CD8-positive, alpha-beta memory T cell (primary cell): ENCODE measurements at regions of chr11 and their contacts with region 1.

Region 1: GRCh38 chr11:86938900-86939880 is 16.0 kb downstream of the FZD4 start:
- DNase-seq: peak in 2 of 5 donors; percentile 10 to 16
- H3K4me3 ChIP-seq: no peak overlapping the region
- H3K4me3 Mint-ChIP-seq: no peak overlapping the region
- H3K27ac ChIP-seq: peak overlapping the region; percentile 48
- H3K27ac Mint-ChIP-seq: no peak overlapping the region
- H3K4me1 ChIP-seq: no peaks in the 10 kb centered on the region
- H3K4me1 Mint-ChIP-seq: no peaks in the 10 kb centered on the region
- H3K27me3 ChIP-seq: no peaks in the 10 kb centered on the region
- H3K27me3 Mint-ChIP-seq: peaks cover 10 to 14% of the 10 kb centered on the region in 2 donors

Region 2: GRCh38 chr11:86802601-86803051 is 136.6 kb before region 1 on chr11:
- CTCF ChIA-PET with region 1: no interaction called
- POLR2A ChIA-PET with region 1: no interaction called
- DNase-seq: no peak
- H3K4me3 ChIP-seq: no peak overlapping the region
- H3K4me3 Mint-ChIP-seq: peak overlapping the region in 1 of 7 donors; percentile 76
- H3K27ac ChIP-seq: no peak overlapping the region
- H3K27ac Mint-ChIP-seq: no peak overlapping the region
- H3K4me1 ChIP-seq: peaks cover 18% of the 10 kb centered on the region
- H3K4me1 Mint-ChIP-seq: peaks cover 19 to 50% (median 24%) of the 10 kb centered on the region in 3 donors
- H3K27me3 ChIP-seq: no peaks in the 10 kb centered on the region
- H3K27me3 Mint-ChIP-seq: peaks cover 9 to 35% of the 10 kb centered on the region in 2 donors

Region 3: DNA sequence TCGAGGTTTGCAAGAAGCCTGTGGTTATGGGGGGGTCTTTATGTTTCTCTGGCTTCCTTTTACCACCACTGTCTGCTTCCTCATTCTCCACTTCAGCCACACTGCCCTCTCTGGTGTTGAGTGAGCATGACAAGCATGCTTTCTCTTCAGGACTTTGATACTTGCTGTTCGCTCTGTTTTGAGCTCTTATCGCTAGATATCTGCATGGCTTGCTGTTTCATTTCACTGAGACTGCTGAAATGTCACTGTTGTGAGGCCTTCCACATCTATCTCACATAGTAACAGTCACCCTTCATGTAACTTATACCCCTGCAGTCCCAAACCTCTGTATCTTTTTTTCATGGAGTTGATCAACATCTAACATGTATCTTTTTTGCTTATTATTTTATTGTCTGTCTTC is 158.4 kb after region 1 on chr11:
- CTCF ChIA-PET with region 1: no interaction called
- POLR2A ChIA-PET with region 1: no interaction called
- DNase-seq: peak in 3 of 5 donors; percentile 9 to 19 (median 17)
- H3K4me3 ChIP-seq: no peak overlapping the region
- H3K4me3 Mint-ChIP-seq: peak overlapping the region in 1 of 7 donors; percentile 20
- H3K27ac ChIP-seq: no peak overlapping the region
- H3K27ac Mint-ChIP-seq: peak overlapping the region in 2 of 8 donors; percentile 16 to 37
- H3K4me1 ChIP-seq: peaks cover 11% of the 10 kb centered on the region
- H3K4me1 Mint-ChIP-seq: peaks cover 6 to 9% (median 8%) of the 10 kb centered on the region in 3 donors
- H3K27me3 ChIP-seq: no peaks in the 10 kb centered on the region
- H3K27me3 Mint-ChIP-seq: no peaks in the 10 kb centered on the region

Region 4: DNA sequence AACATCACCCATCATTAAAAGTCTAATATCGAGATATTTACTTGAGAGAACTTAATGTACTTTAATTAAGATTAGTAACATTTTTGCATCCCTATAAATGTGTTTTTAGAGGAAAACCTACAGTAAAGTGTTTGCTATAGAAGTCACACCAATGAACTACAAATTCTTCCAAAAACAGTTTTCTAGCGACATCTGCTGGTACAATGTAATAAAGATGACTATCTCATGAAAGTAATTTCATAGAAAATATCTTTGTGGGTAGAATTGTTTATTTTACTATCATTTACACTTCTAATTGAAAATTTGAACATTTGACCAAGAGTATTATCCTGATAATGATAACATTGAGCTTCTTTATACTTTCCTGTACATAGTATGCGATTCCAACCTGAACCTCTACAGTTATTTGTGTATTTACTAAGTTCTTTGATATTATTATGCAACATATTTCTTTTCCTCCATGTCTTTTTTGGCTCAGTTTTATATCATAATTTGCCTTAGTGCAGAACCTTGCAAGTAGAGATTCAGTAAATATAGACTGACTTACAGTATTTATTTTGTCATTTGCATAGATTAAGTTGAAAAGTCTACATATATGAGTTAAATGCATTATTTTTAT is 351.2 kb after region 1 on chr11:
- CTCF ChIA-PET with region 1: interaction called, 20 read pairs
- POLR2A ChIA-PET with region 1: no interaction called
- DNase-seq: peak in 2 of 5 donors; percentile 23 to 29
- H3K4me3 ChIP-seq: no peak overlapping the region
- H3K4me3 Mint-ChIP-seq: no peak overlapping the region
- H3K27ac ChIP-seq: no peak overlapping the region
- H3K27ac Mint-ChIP-seq: no peak overlapping the region
- H3K4me1 ChIP-seq: no peaks in the 10 kb centered on the region
- H3K4me1 Mint-ChIP-seq: no peaks in the 10 kb centered on the region
- H3K27me3 ChIP-seq: no peaks in the 10 kb centered on the region
- H3K27me3 Mint-ChIP-seq: no peaks in the 10 kb centered on the region